ENCODE measurements at regions of chr12 and their contacts with region 1.

Region 1: DNA sequence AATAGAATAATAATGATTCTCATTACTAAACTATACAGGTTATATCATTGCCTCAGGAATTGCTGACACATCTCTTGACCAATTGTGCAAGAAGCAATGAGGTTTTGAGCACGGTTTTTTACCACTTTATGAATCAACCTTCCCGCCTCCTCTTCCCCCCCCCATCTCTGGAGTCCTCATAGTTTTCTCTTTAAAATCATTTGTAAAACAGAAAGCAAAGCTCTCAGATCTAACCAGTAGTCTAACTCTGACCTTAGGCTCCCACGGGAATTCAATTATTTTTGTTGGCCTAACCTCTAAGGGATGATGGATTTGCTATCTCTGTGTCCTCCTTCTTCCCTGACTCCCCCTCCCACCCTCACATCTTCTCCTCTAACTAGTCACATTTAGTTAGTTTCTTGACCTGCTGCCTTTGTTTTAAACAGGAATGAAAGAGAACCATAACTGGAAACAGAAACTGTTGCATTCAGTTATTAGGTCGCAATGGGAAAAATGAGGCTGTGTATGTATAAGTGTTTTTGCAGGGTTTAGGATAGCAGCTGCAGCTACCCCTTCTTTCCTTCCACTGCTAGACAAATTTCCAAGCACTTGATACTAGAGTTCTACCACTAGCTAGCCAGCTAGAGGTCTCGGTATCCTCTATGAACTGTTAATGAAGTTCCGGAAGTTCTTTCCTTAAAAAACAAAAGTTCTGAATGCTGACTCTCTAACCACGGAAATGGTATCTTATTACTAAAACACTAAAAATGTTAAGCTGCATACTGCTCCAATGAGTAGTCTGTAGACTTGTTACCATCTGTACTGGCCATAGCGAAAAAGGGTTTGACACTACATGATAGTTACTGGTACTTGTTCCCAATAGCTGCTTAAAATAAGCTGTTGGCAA is 65.4 kb downstream of the TAOK3 start:
- DNase-seq: peak in 1 of 2 donors; percentile 73
- H3K4me3 ChIP-seq: peak overlapping the region; percentile 37 to 46
- H3K27ac ChIP-seq: peak overlapping the region; percentile 70 to 84
- H3K4me1 ChIP-seq: peaks cover 5% of the 10 kb centered on the region in 2 donors
- H3K27me3 ChIP-seq: no peaks in the 10 kb centered on the region
- CTCF ChIP-seq: no peak

Region 2: GRCh38 chr12:118189741-118190191 is 117.5 kb before region 1 on chr12:
- intact Hi-C with region 1: loop called (anchors 5 kb)
- DNase-seq: peak in 1 of 2 donors; percentile 64
- H3K4me3 ChIP-seq: peak overlapping the region; percentile 34 to 54
- H3K27ac ChIP-seq: peak overlapping the region; percentile 64 to 78
- H3K4me1 ChIP-seq: peaks cover 0 to 12% of the 10 kb centered on the region in 2 donors
- H3K27me3 ChIP-seq: no peaks in the 10 kb centered on the region
- CTCF ChIP-seq: no peak

Region 3: DNA sequence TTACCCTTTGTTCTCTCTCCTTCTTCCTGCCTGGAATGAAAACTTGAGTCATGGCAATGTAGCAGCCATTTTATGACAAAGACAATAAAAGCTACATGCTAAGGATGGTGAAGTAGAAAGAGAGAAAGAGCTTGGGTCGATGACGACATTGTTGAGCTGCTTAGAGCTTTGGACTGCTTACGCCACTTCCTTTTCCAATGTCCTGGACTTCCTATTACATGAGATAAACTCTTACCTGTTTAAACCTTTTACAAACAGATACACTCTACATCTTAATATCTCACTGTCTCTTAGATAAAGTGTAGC is 101.3 kb before region 1 on chr12:
- intact Hi-C with region 1: no loop called
- DNase-seq: no peak
- H3K4me3 ChIP-seq: no peak overlapping the region
- H3K27ac ChIP-seq: no peak overlapping the region
- H3K4me1 ChIP-seq: no peaks in the 10 kb centered on the region
- H3K27me3 ChIP-seq: no peaks in the 10 kb centered on the region
- CTCF ChIP-seq: no peak